Dorsolateral prefrontal cortex (tissue), 120 donors: ENCODE measurements at regions of chr19 and their contacts with region 1.

Region 1: GRCh38 chr19:28737021-28737895 is 475.7 kb downstream of the UQCRFS1 start:
- DNase-seq: no peak
- H3K4me3 ChIP-seq: peak overlapping the region in 18 of 59 donors; percentile 1 to 48 (median 24)
- H3K27ac ChIP-seq: peak overlapping the region in 36 of 59 donors; percentile 4 to 87 (median 60)
- H3K27me3 ChIP-seq: no peaks in the 10 kb centered on the region
- CTCF ChIP-seq: peak; percentile 63 to 85 (median 72)

Region 2: GRCh38 chr19:28878862-28879566 is 141.8 kb after region 1 on chr19:
- intact Hi-C with region 1: loop called (anchors 5 kb)
- DNase-seq: peak; percentile 60 to 87 (median 67)
- H3K4me3 ChIP-seq: no peak overlapping the region
- H3K27ac ChIP-seq: no peak overlapping the region
- H3K27me3 ChIP-seq: no peaks in the 10 kb centered on the region
- CTCF ChIP-seq: peak; percentile 64 to 97 (median 81)

Region 3: GRCh38 chr19:29263305-29264135 is 526.3 kb after region 1 on chr19:
- intact Hi-C with region 1: loop called in 1 of 2 experiments (anchors 5 kb)
- DNase-seq: peak in 5 of 10 donors; percentile 50 to 65 (median 59)
- H3K4me3 ChIP-seq: no peak overlapping the region
- H3K27ac ChIP-seq: no peak overlapping the region
- H3K27me3 ChIP-seq: peaks cover 0 to 9% (median 0%) of the 10 kb centered on the region in 45 donors
- CTCF ChIP-seq: peak; percentile 38 to 76 (median 66)